ENCODE measurements at regions of chr3 and their contacts with region 1.

Region 1: GRCh38 chr3:111967651-111968274 is 11.1 kb upstream of the ABHD10 start:
- DNase-seq: peak; percentile 85
- ATAC-seq: peak; percentile 81 to 94

Region 2: GRCh38 chr3:111668912-111669488 is 298.8 kb before region 1 on chr3:
- intact Hi-C with region 1: loop called in 1 of 2 experiments (anchors 5 kb)
- DNase-seq: no peak
- ATAC-seq: peak; percentile 86 to 87

Region 3: GRCh38 chr3:111717601-111718000 is 250.2 kb before region 1 on chr3:
- intact Hi-C with region 1: loop called (anchors 1 to 2 kb)
- DNase-seq: peak; percentile 76
- ATAC-seq: peak; percentile 92 to 93

Region 4: GRCh38 chr3:111910806-111911205 is 57.0 kb before region 1 on chr3:
- intact Hi-C with region 1: loop called in 1 of 2 experiments (anchors 10 kb)
- DNase-seq: no peak
- ATAC-seq: peak; percentile 81 to 82